ENCODE measurements at regions of chr6 and their contacts with region 1.

Region 1: GRCh38 chr6:73879501-73880293 is 183.7 kb downstream of the CD109 start:
- DNase-seq: no peak
- H3K4me3 Mint-ChIP-seq: no peak overlapping the region
- H3K27ac Mint-ChIP-seq: no peak overlapping the region
- H3K4me1 Mint-ChIP-seq: no peaks in the 10 kb centered on the region
- H3K27me3 Mint-ChIP-seq: peaks cover 2% of the 10 kb centered on the region

Region 2: GRCh38 chr6:73893696-73894095 is 14.0 kb after region 1 on chr6:
- intact Hi-C with region 1: loop called (anchors 1 kb)
- DNase-seq: no peak
- H3K4me3 Mint-ChIP-seq: no peak overlapping the region
- H3K27ac Mint-ChIP-seq: no peak overlapping the region
- H3K4me1 Mint-ChIP-seq: no peaks in the 10 kb centered on the region
- H3K27me3 Mint-ChIP-seq: peaks cover 2% of the 10 kb centered on the region

Region 3: GRCh38 chr6:74044417-74045096 is 164.9 kb after region 1 on chr6:
- intact Hi-C with region 1: no loop called
- DNase-seq: no peak
- H3K4me3 Mint-ChIP-seq: no peak overlapping the region
- H3K27ac Mint-ChIP-seq: no peak overlapping the region
- H3K4me1 Mint-ChIP-seq: no peaks in the 10 kb centered on the region
- H3K27me3 Mint-ChIP-seq: no peaks in the 10 kb centered on the region